OCI-LY7 (cell line): ENCODE measurements at regions of chr7 and their contacts with region 1.

Region 1: DNA sequence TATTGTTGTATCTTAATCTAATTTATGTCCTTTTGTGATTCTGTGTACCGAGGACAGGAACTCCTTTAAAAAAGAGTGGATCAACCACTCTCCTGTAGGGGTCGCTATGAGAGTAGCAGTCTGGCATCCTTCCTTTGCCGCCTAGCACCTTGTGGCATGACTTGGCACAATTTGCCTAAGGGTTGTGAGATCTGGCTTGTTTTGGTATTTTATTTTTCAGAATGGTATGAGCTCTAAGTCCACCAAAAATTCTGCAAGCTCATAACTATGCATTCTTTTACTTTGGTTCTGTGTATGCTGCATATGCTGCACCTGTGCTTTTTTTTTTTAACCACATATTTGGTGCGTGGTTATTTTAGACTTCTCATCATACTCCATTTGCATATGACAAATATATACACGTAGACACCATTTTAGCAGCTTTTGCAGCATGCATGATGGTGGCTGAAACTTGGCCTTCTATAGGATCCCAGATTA is 112.8 kb downstream of the CDK14 start:
- DNase-seq: peak; percentile 93
- H3K4me3 ChIP-seq: peak overlapping the region; percentile 86
- H3K27ac ChIP-seq: peak overlapping the region; percentile 92
- H3K4me1 ChIP-seq: peaks cover 55% of the 10 kb centered on the region
- CTCF ChIP-seq: peak; percentile 100

Region 2: DNA sequence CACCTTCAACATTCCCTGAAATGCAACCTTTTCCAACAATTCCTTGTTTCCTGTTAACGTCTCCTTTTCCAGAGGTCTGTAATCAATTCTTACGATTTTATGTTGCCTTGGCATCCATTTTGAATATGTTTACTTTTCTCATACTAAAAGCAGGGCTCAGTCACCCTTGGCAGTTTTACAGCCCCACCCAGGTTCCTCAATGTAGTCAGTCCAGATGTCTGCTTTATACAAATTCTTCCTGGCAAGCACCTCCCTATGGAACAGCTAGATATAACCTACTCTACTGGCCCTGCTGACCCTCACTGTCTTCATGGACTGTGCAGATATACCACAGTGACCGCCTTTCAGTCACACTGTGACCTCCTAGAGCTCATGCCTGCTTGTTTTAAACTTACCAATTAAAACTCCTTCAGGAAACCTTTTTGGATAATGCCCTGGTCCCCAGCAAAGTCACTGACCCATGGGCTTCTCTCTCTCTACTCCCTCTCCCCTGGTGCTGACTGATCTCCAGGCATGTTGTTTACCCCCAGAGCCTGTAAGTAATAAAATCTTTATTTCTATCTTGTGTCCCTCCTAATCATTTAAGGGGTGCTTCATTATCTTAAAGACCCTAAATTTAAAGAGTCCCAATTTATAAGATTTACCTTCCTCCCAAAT is 701.8 kb before region 1 on chr7:
- CTCF ChIA-PET with region 1: no interaction called
- POLR2A ChIA-PET with region 1: no interaction called
- intact Hi-C with region 1: no loop called
- DNase-seq: no peak
- H3K4me3 ChIP-seq: no peak overlapping the region
- H3K27ac ChIP-seq: no peak overlapping the region
- H3K4me1 ChIP-seq: no peaks in the 10 kb centered on the region
- CTCF ChIP-seq: no peak

Region 3: DNA sequence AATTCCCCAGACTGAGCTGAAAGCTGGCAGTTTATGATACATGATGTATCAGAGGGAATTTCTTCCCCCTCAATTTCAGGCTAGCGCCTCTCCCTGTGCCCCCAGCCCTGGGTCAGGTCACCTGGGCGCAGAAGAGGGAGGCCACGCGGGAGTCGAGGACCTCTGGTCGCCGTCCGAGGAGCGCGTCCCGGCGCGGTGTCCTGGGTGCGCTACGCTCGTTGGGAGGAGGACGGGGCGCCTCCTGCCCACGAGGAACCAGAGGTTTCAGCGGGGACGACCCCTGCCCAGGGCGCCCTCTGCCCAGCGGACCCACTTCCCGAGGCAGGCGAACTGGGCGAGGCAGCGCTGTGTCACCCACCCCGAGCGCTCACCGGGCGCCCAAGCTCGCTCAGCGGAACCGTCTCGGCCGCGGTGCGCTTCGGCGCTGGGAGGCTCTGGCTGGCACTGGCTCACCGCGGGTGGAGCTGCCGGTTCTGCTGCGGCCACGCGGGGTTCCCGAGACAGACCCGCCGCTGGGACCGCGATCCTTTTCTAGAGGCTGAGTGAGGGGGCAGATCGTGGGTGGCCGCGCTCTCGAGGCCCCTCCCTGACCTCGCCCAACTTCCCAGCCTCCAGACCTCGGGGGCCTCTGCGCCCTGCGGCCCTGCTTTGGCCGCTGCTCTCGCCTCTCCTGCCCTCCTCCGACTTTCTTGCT is 387.9 kb before region 1 on chr7 and contains the start of gene FAM237B:
- CTCF ChIA-PET with region 1: no interaction called
- POLR2A ChIA-PET with region 1: no interaction called
- intact Hi-C with region 1: no loop called
- DNase-seq: no peak
- H3K4me3 ChIP-seq: no peak within 1 kb of the TSS
- H3K27ac ChIP-seq: no peak within 1 kb of the TSS
- H3K4me1 ChIP-seq: no peaks in the 10 kb centered on the region
- CTCF ChIP-seq: no peak
- total RNA-seq, gene FAM237B: not detected in 2 replicates

Region 4: GRCh38 chr7:90595801-90596671 is 112.8 kb before region 1 on chr7 and contains the start of gene CDK14:
- CTCF ChIA-PET with region 1: no interaction called
- POLR2A ChIA-PET with region 1: no interaction called
- intact Hi-C with region 1: loop called (anchors 5 kb)
- DNase-seq: peak; percentile 61
- H3K4me3 ChIP-seq: peak within 1 kb of the TSS; percentile 71
- H3K27ac ChIP-seq: no peak within 1 kb of the TSS
- H3K4me1 ChIP-seq: peaks cover 3% of the 10 kb centered on the region
- CTCF ChIP-seq: peak; percentile 52
- total RNA-seq, gene CDK14: 90.7 and 112 TPM in 2 replicates

Region 5: DNA sequence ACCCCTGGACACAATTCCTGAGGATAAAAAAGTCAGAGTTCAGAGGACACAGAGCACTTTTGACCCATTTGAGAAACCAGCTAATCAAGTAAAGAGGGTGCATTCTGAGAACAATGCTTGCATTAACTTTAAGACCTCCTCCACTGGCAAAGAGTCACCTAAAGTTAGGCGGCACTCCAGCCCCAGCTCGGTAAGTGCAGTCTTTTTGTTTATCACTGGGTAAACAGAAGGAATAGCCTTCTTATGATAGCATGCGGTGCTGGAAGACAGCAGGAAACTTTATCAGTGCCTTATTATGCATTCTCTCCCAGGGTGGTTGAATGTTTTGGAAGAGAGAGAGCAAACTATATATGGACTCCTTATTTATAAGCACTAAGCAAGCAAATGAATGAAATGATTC is 17.7 kb after region 1 on chr7:
- CTCF ChIA-PET with region 1: interaction called, 3 read pairs
- POLR2A ChIA-PET with region 1: interaction called, 230 read pairs
- intact Hi-C with region 1: loop called (anchors 1 kb)
- DNase-seq: no peak
- H3K4me3 ChIP-seq: peak overlapping the region; percentile 66
- H3K27ac ChIP-seq: peak overlapping the region; percentile 81
- H3K4me1 ChIP-seq: peaks cover 80% of the 10 kb centered on the region
- CTCF ChIP-seq: no peak

Region 6: DNA sequence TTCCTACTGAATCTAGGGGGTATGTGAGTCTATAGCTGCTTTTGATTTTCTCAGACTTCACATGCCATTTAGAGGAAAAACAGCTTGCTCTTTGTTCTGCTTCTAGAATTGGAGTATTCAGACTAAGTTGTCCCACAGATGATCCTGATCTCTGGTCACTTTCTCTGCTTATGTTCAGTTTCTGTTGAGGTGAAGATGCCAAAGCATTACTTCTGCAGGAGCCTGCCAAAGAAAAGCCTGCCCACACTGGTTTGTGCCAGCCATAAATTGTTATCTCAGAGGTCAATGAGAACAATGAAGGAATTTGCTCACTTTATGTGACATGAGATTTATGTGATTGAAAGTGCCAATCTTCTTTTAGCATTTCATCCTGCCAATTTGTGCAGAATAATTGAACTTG is 50.8 kb after region 1 on chr7:
- CTCF ChIA-PET with region 1: interaction called, 4 read pairs
- POLR2A ChIA-PET with region 1: interaction called, 89 read pairs
- intact Hi-C with region 1: loop called (anchors 2 kb)
- DNase-seq: no peak
- H3K4me3 ChIP-seq: no peak overlapping the region
- H3K27ac ChIP-seq: peak overlapping the region; percentile 31
- H3K4me1 ChIP-seq: peaks cover 89% of the 10 kb centered on the region
- CTCF ChIP-seq: no peak

Region 7: DNA sequence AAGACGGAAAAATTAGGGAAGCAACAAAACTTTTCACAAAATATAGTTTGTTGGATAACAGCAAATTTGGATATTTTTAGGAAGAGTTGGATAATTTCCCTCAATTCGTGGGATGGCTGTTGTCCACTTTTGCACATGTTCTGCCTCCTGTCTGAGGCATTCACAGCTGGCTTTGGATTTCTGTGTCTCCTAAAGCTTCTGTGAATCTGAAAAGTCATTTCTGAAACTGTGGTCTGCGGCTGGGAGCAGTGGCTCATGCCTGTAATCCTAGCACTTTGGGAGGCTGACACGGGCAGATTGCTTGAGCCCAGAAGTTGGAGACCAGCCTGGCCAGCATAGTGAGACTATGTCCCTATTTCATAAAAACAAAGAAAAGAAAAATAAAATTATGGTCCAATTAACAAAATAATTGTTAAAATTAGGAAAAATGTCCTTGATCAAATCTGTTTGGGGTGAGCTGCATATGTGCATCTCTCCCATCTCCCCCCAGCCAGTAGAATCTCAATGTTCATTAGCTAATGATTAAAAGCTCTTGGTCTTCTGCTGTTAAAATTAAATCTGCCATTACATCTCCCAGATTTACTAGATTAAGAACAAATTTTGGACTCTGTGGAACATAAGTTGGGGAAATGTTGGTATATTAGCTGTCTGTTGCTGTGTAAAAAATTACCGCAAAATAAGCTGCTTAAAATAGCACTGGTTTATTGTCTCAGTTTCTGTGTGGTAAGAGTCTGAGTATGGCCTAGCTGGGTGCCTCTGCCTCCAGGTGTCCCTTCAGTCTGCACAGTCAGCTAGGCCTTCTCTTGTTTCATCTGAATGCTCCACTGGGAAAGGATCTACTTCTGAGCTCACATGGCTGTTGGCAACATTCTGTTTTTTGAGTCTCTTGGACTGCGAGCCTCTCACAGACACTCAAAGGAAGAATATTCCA is 223.4 kb after region 1 on chr7:
- CTCF ChIA-PET with region 1: interaction called, 6 read pairs
- POLR2A ChIA-PET with region 1: interaction called, 20 read pairs
- intact Hi-C with region 1: loop called (anchors 1 kb)
- DNase-seq: peak; percentile 48
- H3K4me3 ChIP-seq: no peak overlapping the region
- H3K27ac ChIP-seq: peak overlapping the region; percentile 29
- H3K4me1 ChIP-seq: peaks cover 42% of the 10 kb centered on the region
- CTCF ChIP-seq: no peak

Region 8: DNA sequence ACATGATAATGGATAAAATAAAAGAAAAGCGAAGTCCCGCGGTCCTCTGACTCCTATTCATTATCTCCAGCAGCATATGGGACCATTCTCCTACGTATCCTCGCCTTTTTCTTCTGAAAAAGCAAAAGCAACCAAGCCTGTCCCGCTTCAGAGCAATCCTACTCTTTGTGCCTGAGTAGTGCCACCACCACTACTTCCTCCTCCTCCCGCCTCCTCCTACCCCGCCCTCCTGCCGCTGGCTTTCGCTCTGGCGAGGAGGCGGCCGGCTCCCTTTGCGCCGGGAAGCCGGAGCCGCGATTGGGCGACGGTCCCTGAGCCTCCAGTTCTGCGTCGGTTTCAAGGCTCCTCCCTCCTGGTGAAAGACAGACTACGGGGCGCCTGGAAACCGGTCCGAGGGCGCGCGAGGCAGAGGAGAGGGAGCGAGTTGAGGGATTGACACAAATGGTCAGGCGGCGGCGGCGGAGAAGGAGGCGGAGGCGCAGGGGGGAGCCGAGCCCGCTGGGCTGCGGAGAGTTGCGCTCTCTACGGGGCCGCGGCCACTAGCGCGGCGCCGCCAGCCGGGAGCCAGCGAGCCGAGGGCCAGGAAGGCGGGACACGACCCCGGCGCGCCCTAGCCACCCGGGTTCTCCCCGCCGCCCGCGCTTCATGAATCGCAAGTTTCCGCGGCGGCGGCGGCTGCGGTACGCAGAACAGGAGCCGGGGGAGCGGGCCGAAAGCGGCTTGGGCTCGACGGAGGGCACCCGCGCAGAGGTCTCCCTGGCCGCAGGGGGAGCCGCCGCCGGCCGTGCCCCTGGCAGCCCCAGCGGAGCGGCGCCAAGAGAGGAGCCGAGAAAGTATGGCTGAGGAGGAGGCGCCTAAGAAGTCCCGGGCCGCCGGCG is 555.4 kb after region 1 on chr7 and contains the start of gene FZD1:
- CTCF ChIA-PET with region 1: no interaction called
- POLR2A ChIA-PET with region 1: no interaction called
- intact Hi-C with region 1: loop called (anchors 5 kb)
- DNase-seq: peak; percentile 94
- H3K4me3 ChIP-seq: peak within 1 kb of the TSS; percentile 77
- H3K27ac ChIP-seq: no peak within 1 kb of the TSS
- H3K4me1 ChIP-seq: peaks cover 12% of the 10 kb centered on the region
- CTCF ChIP-seq: no peak
- total RNA-seq, gene FZD1: 1.4 and 2.4 TPM in 2 replicates